Activated naive CD4-positive, alpha-beta T cell treated with anti-CD3 and anti-CD28 coated beads for 36 hours (primary cell): ENCODE measurements at regions of chr2 and their contacts with region 1.

Region 1: GRCh38 chr2:227106845-227107759 is 56.9 kb downstream of the COL4A4 start:
- DNase-seq: peak; percentile 73
- H3K4me3 Mint-ChIP-seq: no peak overlapping the region
- H3K27ac Mint-ChIP-seq: no peak overlapping the region
- H3K4me1 Mint-ChIP-seq: no peaks in the 10 kb centered on the region
- H3K27me3 Mint-ChIP-seq: no peaks in the 10 kb centered on the region

Region 2: GRCh38 chr2:225889446-225889850 is 1217.7 kb before region 1 on chr2:
- CTCF ChIA-PET with region 1: no interaction called
- intact Hi-C with region 1: loop called (anchors 1 kb)
- DNase-seq: no peak
- H3K4me3 Mint-ChIP-seq: no peak overlapping the region
- H3K27ac Mint-ChIP-seq: no peak overlapping the region
- H3K4me1 Mint-ChIP-seq: no peaks in the 10 kb centered on the region
- H3K27me3 Mint-ChIP-seq: peaks cover 14% of the 10 kb centered on the region

Region 3: DNA sequence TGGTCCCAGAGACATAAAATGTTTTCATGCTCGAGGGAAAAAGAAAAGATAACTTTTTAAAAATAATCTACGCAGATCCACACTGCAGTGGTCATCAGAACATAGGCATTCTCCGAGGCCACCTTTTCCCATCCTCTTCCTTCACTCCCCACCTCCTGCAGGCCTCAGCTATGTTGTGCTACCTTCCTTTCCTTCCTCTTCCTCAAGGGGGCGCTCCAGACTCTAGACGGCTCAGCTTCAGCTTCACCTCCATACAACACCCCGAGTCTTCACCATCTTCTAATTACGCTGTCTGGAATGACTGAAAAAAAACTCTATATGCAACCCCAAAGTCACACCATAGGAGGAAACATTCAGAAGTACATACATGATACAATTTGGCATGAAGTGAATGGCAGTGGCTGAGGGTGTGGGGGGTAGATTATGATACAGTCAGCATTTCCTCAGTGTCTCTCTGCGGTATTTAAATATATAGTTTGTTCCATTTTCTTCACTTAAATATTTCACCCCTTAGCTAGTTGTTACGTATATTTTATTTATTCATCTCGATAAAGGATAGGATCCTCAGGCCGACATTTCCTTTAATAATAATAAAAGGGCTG is 891.1 kb before region 1 on chr2:
- CTCF ChIA-PET with region 1: no interaction called
- intact Hi-C with region 1: loop called (anchors 1 kb)
- DNase-seq: peak; percentile 80
- H3K4me3 Mint-ChIP-seq: no peak overlapping the region
- H3K27ac Mint-ChIP-seq: no peak overlapping the region
- H3K4me1 Mint-ChIP-seq: no peaks in the 10 kb centered on the region
- H3K27me3 Mint-ChIP-seq: no peaks in the 10 kb centered on the region

Region 4: DNA sequence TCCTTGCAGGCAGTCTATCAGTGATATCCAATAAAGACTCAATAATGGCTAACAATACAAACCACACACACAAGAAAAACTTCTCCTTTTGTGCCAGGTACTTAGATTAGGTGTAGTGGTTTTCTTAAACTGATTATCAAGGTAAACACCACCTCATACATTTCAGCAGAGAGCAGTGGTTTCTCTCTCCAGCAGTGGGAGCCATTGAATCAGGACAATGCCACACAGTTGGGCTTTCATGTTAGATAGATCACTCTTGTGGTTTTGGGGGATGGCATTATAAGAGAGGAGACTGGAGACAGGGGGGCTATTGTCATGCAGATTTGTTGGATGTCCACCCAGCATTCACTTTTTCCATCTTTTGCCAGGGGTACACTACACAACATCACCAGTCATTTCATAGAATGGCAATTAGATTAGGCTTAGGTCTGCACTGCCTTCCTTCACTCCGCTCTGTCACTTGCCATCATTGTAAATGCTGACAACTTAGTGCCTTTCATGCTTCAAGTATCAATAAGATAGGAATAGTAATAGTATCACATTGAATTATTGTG is 293.9 kb before region 1 on chr2:
- CTCF ChIA-PET with region 1: no interaction called
- intact Hi-C with region 1: loop called (anchors 1 kb)
- DNase-seq: peak; percentile 24
- H3K4me3 Mint-ChIP-seq: no peak overlapping the region
- H3K27ac Mint-ChIP-seq: no peak overlapping the region
- H3K4me1 Mint-ChIP-seq: no peaks in the 10 kb centered on the region
- H3K27me3 Mint-ChIP-seq: peaks cover 17% of the 10 kb centered on the region

Region 5: GRCh38 chr2:227033471-227034148 is 73.5 kb before region 1 on chr2:
- CTCF ChIA-PET with region 1: interaction called, 3 read pairs
- intact Hi-C with region 1: loop called (anchors 2 kb)
- DNase-seq: peak; percentile 36
- H3K4me3 Mint-ChIP-seq: no peak overlapping the region
- H3K27ac Mint-ChIP-seq: no peak overlapping the region
- H3K4me1 Mint-ChIP-seq: no peaks in the 10 kb centered on the region
- H3K27me3 Mint-ChIP-seq: peaks cover 18% of the 10 kb centered on the region

Region 6: GRCh38 chr2:227219312-227220105 is 112.4 kb after region 1 on chr2:
- CTCF ChIA-PET with region 1: no interaction called
- intact Hi-C with region 1: no loop called
- DNase-seq: no peak
- H3K4me3 Mint-ChIP-seq: no peak overlapping the region
- H3K27ac Mint-ChIP-seq: no peak overlapping the region
- H3K4me1 Mint-ChIP-seq: no peaks in the 10 kb centered on the region
- H3K27me3 Mint-ChIP-seq: no peaks in the 10 kb centered on the region

Region 7: GRCh38 chr2:227256605-227257004 is 149.5 kb after region 1 on chr2:
- CTCF ChIA-PET with region 1: no interaction called
- intact Hi-C with region 1: no loop called
- DNase-seq: no peak
- H3K4me3 Mint-ChIP-seq: no peak overlapping the region
- H3K27ac Mint-ChIP-seq: no peak overlapping the region
- H3K4me1 Mint-ChIP-seq: no peaks in the 10 kb centered on the region
- H3K27me3 Mint-ChIP-seq: no peaks in the 10 kb centered on the region